GM12878 (cell line): ENCODE measurements at regions of chr19 and their contacts with region 1.

Region 1: GRCh38 chr19:925526-926322 is at the start of gene ARID3A:
- DNase-seq: no peak
- ATAC-seq: peak; percentile 27
- H3K4me3 ChIP-seq: peak within 1 kb of the TSS; percentile 99
- H3K27ac ChIP-seq: peak within 1 kb of the TSS; percentile 96
- H3K4me1 ChIP-seq: peaks cover 18% of the 10 kb centered on the region
- H3K27me3 ChIP-seq: no peaks in the 10 kb centered on the region
- CTCF ChIP-seq: no peak
- EP300 ChIP-seq: no peak
- POLR2A ChIP-seq: peak; percentile 80
- RAD21 ChIP-seq: no peak; the same call in 1 of the 2 replicates
- polyA plus RNA-seq, gene ARID3A: 0.76 to 1.6 TPM

Region 2: DNA sequence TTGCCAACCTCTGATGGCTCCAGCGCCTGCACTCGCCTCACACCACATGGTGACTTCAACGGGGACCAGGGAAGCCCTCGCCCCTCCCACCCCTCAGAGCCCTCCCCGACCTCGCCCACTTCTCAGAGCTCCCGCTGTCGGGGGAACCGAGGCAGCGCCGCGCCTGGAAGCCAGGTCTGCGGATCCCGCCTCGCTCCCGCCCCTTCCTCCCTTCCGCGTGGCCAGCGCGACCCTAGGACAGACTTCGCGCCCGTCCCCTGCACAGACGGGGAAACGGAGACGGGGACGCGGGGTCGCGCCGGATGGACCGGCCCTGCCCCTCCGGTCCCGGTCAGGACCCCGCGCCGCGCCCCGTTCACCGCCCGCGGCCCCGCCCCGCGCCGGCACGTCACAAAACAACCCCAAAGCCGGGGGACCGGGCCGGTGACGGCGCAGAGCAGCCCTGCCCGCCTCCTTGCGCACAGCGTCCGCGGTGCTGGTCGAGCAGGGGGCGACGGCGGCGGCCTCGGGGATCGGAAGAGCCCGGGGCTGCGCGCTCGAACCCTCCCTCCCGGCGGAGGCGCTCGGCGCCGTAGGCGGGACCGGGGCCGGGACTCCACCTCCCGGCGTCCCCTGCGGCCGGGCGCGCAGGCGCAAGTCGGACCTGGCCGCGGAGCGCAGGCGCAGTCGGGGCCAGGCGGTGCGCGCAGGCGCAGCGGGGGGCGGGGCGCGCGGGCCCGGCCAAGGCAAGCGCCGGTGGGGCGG is 394.5 kb before region 1 on chr19:
- CTCF ChIA-PET with region 1: no interaction called
- POLR2A ChIA-PET with region 1: no interaction called
- RAD21 ChIA-PET with region 1: no interaction called
- SMC1A ChIA-PET with region 1: no interaction called
- in situ Hi-C with region 1: no loop called
- intact Hi-C with region 1: no loop called
- DNase-seq: no peak
- ATAC-seq: peak; percentile 78
- H3K4me3 ChIP-seq: peak overlapping the region; percentile 61
- H3K27ac ChIP-seq: peak overlapping the region; percentile 65
- H3K4me1 ChIP-seq: peaks cover 8% of the 10 kb centered on the region
- H3K27me3 ChIP-seq: no peaks in the 10 kb centered on the region
- CTCF ChIP-seq: 0 out of 6 replicates have a peak, but pooled peaks of 1 of the 3 experiments have one; percentile 7
- EP300 ChIP-seq: no peak
- POLR2A ChIP-seq: peak; percentile 67
- RAD21 ChIP-seq: no peak

Region 3: GRCh38 chr19:732148-733069 is 193.3 kb before region 1 on chr19:
- CTCF ChIA-PET with region 1: no interaction called
- POLR2A ChIA-PET with region 1: no interaction called
- RAD21 ChIA-PET with region 1: no interaction called
- SMC1A ChIA-PET with region 1: no interaction called
- in situ Hi-C with region 1: no loop called
- intact Hi-C with region 1: no loop called
- DNase-seq: no peak
- ATAC-seq: peak; percentile 28
- H3K4me3 ChIP-seq: no peak overlapping the region
- H3K27ac ChIP-seq: no peak overlapping the region
- H3K4me1 ChIP-seq: peaks cover 5% of the 10 kb centered on the region
- H3K27me3 ChIP-seq: no peaks in the 10 kb centered on the region
- CTCF ChIP-seq: no peak
- EP300 ChIP-seq: no peak
- POLR2A ChIP-seq: no peak
- RAD21 ChIP-seq: no peak

Region 4: DNA sequence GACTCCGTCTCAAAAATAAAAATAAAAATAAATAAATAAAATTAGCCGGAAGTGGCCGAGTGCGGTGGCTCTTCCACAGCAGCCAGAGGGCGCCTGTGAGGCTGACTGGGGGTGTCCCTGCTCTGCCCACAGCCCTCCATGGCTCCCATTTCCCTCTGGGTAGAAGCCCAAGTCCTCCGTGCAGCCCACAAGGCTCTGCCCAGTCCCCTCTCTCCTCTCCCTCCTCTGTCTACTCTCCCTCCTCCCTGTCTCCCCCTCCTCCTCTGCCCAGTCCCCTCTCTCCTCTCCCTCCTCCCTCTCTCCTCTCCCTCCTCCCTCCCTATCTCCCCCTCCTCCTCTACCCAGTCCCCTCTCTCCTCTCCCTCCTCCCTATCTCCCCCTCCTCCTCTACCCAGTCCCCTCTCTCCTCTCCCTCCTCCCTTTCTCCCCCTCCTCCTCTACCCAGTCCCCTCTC is 154.4 kb before region 1 on chr19:
- CTCF ChIA-PET with region 1: interaction called, 12 read pairs
- POLR2A ChIA-PET with region 1: no interaction called
- RAD21 ChIA-PET with region 1: interaction called, 4 read pairs
- SMC1A ChIA-PET with region 1: no interaction called
- in situ Hi-C with region 1: loop called (anchors 5 kb)
- intact Hi-C with region 1: loop called (anchors 1 kb)
- DNase-seq: no peak
- ATAC-seq: peak; percentile 77
- H3K4me3 ChIP-seq: no peak overlapping the region
- H3K27ac ChIP-seq: no peak overlapping the region
- H3K4me1 ChIP-seq: no peaks in the 10 kb centered on the region
- H3K27me3 ChIP-seq: no peaks in the 10 kb centered on the region
- CTCF ChIP-seq: peak; percentile 39 to 57 (median 40); a peak in 5 of 6 replicates
- EP300 ChIP-seq: no peak
- POLR2A ChIP-seq: no peak
- RAD21 ChIP-seq: no peak

Region 5: GRCh38 chr19:947265-948036 is 21.7 kb after region 1 on chr19:
- CTCF ChIA-PET with region 1: interaction called, 18 read pairs
- POLR2A ChIA-PET with region 1: interaction called, 7 read pairs
- RAD21 ChIA-PET with region 1: interaction called, 20 read pairs
- SMC1A ChIA-PET with region 1: interaction called, 16 read pairs
- in situ Hi-C with region 1: no loop called
- intact Hi-C with region 1: loop called (anchors 1 kb)
- DNase-seq: peak; percentile 92
- ATAC-seq: peak; percentile 83
- H3K4me3 ChIP-seq: peak overlapping the region; percentile 54
- H3K27ac ChIP-seq: peak overlapping the region; percentile 99
- H3K4me1 ChIP-seq: peaks cover 50% of the 10 kb centered on the region
- H3K27me3 ChIP-seq: no peaks in the 10 kb centered on the region
- CTCF ChIP-seq: no peak
- EP300 ChIP-seq: peak; percentile 87 to 93
- POLR2A ChIP-seq: peak; percentile 60; the same call in 1 of the 2 replicates
- RAD21 ChIP-seq: 0 out of 2 replicates have a peak, but pooled peaks have one; percentile 17

Region 6: GRCh38 chr19:954672-955444 is 29.1 kb after region 1 on chr19:
- CTCF ChIA-PET with region 1: interaction called, 3 read pairs
- POLR2A ChIA-PET with region 1: no interaction called
- RAD21 ChIA-PET with region 1: interaction called, 20 read pairs
- SMC1A ChIA-PET with region 1: interaction called, 16 read pairs
- in situ Hi-C with region 1: no loop called
- intact Hi-C with region 1: no loop called
- DNase-seq: peak; percentile 70
- ATAC-seq: peak; percentile 81
- H3K4me3 ChIP-seq: peak overlapping the region; percentile 71; the same call in 1 of the 2 replicates
- H3K27ac ChIP-seq: peak overlapping the region; percentile 95
- H3K4me1 ChIP-seq: peaks cover 54% of the 10 kb centered on the region
- H3K27me3 ChIP-seq: no peaks in the 10 kb centered on the region
- CTCF ChIP-seq: 0 out of 6 replicates have a peak, but pooled peaks of 1 of the 3 experiments have one; percentile 5
- EP300 ChIP-seq: peak; percentile 74 to 89; a peak in 3 of 4 replicates
- POLR2A ChIP-seq: peak; percentile 71
- RAD21 ChIP-seq: no peak

Region 7: DNA sequence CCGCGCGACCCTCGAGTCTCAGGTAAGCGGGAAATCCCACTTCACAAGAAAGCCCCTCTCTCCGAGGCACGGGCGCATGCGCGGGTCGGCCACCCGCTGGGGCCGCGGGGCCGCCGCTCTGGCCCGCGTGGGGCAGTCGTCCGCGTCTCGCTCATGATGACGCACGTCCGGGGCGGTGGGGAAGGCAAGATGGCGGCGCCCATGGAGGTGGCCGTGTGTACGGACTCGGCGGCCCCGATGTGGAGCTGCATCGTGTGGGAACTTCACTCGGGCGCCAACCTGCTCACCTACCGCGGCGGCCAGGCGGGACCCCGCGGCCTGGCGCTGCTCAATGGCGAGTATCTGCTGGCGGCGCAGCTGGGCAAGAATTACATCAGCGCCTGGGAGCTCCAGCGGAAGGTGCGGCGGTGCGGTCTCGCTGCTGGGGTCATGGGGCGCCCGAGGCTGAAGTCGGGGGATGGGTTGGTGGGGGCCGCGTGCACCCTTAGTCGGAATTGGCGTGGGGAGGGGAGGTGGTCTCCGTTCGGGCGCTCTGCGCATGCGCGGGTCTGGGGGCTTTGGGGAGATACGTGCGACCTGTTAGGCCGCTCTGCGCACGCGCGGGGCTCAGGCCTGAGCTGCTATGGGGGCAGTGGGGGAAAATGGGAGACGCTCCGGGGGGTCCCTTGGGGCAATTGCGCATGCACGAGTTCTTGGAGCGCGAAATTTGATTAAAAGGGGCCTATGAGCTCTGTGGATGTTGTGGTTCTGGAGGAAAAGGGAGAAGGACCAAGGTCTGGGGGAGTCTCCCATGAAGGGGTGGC is 58.6 kb after region 1 on chr19 and contains the start of gene WDR18:
- CTCF ChIA-PET with region 1: interaction called, 150 read pairs
- POLR2A ChIA-PET with region 1: interaction called, 36 read pairs
- RAD21 ChIA-PET with region 1: interaction called, 95 read pairs
- SMC1A ChIA-PET with region 1: interaction called, 119 read pairs
- in situ Hi-C with region 1: loop called (anchors 5 kb)
- intact Hi-C with region 1: loop called (anchors 1 kb)
- DNase-seq: peak; percentile 49
- ATAC-seq: peak; percentile 88
- H3K4me3 ChIP-seq: peak within 1 kb of the TSS; percentile 86
- H3K27ac ChIP-seq: peak within 1 kb of the TSS; percentile 92
- H3K4me1 ChIP-seq: peaks cover 19% of the 10 kb centered on the region
- H3K27me3 ChIP-seq: no peaks in the 10 kb centered on the region
- CTCF ChIP-seq: peak in 2 of 3 experiments; percentile 8 to 9; a peak in 1 of 6 replicates
- EP300 ChIP-seq: no peak
- POLR2A ChIP-seq: peak; percentile 90
- RAD21 ChIP-seq: no peak
- polyA plus RNA-seq, gene WDR18: 3.0 to 3.3 TPM

Region 8: GRCh38 chr19:1001538-1002166 is 75.9 kb after region 1 on chr19:
- CTCF ChIA-PET with region 1: interaction called, 4 read pairs
- POLR2A ChIA-PET with region 1: interaction called, 4 read pairs
- RAD21 ChIA-PET with region 1: interaction called, 7 read pairs
- SMC1A ChIA-PET with region 1: no interaction called
- in situ Hi-C with region 1: no loop called
- intact Hi-C with region 1: loop called (anchors 1 kb)
- DNase-seq: no peak
- ATAC-seq: peak; percentile 92
- H3K4me3 ChIP-seq: no peak overlapping the region
- H3K27ac ChIP-seq: no peak overlapping the region
- H3K4me1 ChIP-seq: no peaks in the 10 kb centered on the region
- H3K27me3 ChIP-seq: peaks cover 3 to 5% of the 10 kb centered on the region in 2 experiments; a peak in 3 of 4 replicates
- CTCF ChIP-seq: peak; percentile 86 to 95 (median 95)
- EP300 ChIP-seq: no peak
- POLR2A ChIP-seq: no peak
- RAD21 ChIP-seq: peak; percentile 66

Region 9: DNA sequence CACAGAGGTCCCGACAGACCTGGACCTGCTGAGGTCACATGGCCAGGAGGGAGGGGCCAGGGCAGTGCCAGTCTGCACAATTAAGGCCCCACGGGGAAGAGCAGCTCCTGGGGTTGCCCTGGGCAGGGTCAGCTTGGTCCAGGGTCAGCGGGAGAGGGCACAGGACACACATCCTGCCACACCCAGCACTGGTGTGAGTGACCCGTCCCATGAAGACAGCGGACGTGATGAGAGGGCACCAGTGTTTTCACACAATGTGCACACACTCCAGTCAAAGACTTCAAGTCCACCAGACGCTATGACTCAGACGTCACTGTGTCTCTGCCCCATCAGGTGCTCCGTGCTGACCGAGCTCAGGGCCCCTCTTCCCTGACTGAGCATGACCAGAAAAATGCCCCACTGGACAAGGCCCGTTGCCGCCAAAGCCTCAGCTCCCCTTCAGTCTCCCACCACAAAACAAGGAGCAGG is 91.0 kb after region 1 on chr19:
- CTCF ChIA-PET with region 1: no interaction called
- POLR2A ChIA-PET with region 1: no interaction called
- RAD21 ChIA-PET with region 1: no interaction called
- SMC1A ChIA-PET with region 1: no interaction called
- in situ Hi-C with region 1: no loop called
- intact Hi-C with region 1: no loop called
- DNase-seq: no peak
- ATAC-seq: no peak
- H3K4me3 ChIP-seq: no peak overlapping the region; the same call in 1 of the 2 replicates
- H3K27ac ChIP-seq: no peak overlapping the region
- H3K4me1 ChIP-seq: peaks cover 32% of the 10 kb centered on the region
- H3K27me3 ChIP-seq: no peaks in the 10 kb centered on the region
- CTCF ChIP-seq: no peak
- EP300 ChIP-seq: no peak
- POLR2A ChIP-seq: no peak
- RAD21 ChIP-seq: no peak

Region 10: DNA sequence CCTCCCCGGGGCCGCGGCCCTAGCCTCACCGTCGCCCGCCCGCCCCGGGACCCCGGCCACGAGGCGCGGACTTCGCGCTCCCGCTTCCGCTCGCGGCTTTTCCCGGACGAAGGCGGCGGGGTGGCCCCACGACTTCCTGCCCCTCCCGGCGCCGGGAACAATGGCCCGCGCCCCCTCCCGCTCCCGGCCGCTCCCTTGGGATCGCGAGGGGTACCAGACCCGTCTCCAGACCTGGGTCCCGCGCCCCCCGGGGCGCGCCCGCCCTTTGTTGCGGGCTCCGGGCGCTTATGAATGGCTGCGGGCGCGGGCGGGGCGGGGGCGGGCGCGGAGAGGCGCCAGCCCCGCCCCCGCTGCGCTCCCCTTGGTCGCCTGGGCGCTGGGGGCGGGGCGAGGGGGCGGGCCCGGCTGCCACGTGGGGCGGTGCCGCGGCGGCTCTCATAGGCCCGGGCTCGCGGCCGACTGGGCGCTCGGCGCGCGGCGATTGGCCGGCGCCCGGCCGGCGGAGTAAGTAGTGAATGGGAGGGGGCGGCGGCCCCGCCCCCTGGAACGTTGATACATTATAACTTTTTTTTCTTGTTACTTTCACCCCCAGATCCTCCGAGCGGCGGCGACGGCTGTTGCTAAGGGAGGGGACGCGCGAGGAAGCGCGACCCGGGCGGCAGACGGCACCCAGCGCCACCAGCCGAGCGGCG is 323.7 kb after region 1 on chr19:
- CTCF ChIA-PET with region 1: no interaction called
- POLR2A ChIA-PET with region 1: no interaction called
- RAD21 ChIA-PET with region 1: interaction called, 3 read pairs
- SMC1A ChIA-PET with region 1: no interaction called
- in situ Hi-C with region 1: no loop called
- intact Hi-C with region 1: loop called (anchors 10 kb)
- DNase-seq: no peak
- ATAC-seq: peak; percentile 46
- H3K4me3 ChIP-seq: peak overlapping the region; percentile 91
- H3K27ac ChIP-seq: peak overlapping the region; percentile 82
- H3K4me1 ChIP-seq: peaks cover 16% of the 10 kb centered on the region
- H3K27me3 ChIP-seq: no peaks in the 10 kb centered on the region
- CTCF ChIP-seq: no peak
- EP300 ChIP-seq: no peak
- POLR2A ChIP-seq: peak; percentile 90
- RAD21 ChIP-seq: no peak